Astrocyte of the spinal cord (primary cell): ENCODE measurements at regions of chr3 and their contacts with region 1.

Region 1: DNA sequence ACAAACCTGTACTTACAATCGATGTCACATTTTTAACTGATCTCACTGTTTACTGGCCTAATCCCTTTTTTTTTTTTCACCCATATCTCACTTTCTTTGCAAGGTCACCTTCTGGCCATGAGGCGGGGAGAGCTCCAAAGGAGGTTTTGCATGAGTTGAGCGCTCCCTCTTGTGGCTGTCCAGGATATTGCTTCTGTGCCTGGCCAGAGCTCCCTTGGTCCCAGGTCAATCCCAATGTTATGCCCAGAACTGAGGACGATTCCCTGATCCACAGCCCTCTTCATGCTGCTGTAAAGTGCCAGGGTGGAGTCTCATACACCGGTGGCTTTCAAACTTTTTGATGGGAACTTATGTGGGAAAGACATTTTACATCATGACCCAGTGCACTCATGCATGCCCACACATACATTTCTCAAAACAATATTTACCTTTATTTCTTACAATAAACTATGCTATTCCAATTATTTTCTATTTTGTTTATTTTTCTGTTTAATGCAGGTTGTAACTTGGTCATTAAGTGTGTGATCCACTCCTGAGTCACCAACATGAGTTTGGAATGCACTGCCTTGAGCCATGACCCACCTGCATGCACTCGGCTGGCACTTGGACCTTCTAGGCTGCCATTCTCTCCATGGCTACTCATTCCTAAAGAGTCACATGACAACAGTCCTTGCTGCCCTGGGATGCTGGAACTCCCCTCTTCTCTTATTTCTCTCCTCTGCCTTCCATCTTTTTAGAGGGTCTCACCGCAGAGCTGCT is 9.6 kb upstream of the SST start:
- DNase-seq: peak; percentile 65
- H3K4me3 ChIP-seq: no peak overlapping the region
- CTCF ChIP-seq: peak; percentile 97

Region 2: GRCh38 chr3:187210545-187211327 is 469.1 kb before region 1 on chr3:
- in situ Hi-C with region 1: no loop called
- DNase-seq: peak; percentile 76
- H3K4me3 ChIP-seq: no peak overlapping the region
- CTCF ChIP-seq: no peak

Region 3: GRCh38 chr3:187319699-187320302 is 360.0 kb before region 1 on chr3:
- in situ Hi-C with region 1: loop called (anchors 10 kb)
- DNase-seq: peak; percentile 58
- H3K4me3 ChIP-seq: no peak overlapping the region
- CTCF ChIP-seq: peak; percentile 92